ENCODE measurements at regions of chr12 and their contacts with region 1.

Region 1: GRCh38 chr12:24902511-24903328 is 46.2 kb downstream of the BCAT1 start:
- H3K4me3 Mint-ChIP-seq: peak overlapping the region; percentile 91
- H3K27ac Mint-ChIP-seq: no peak overlapping the region
- H3K4me1 Mint-ChIP-seq: peaks cover 46% of the 10 kb centered on the region
- H3K27me3 Mint-ChIP-seq: peaks cover 17% of the 10 kb centered on the region

Region 2: GRCh38 chr12:24814379-24815113 is 88.2 kb before region 1 on chr12:
- intact Hi-C with region 1: loop called (anchors 5 kb)
- H3K4me3 Mint-ChIP-seq: peak overlapping the region; percentile 55
- H3K27ac Mint-ChIP-seq: peak overlapping the region; percentile 81
- H3K4me1 Mint-ChIP-seq: peaks cover 30% of the 10 kb centered on the region
- H3K27me3 Mint-ChIP-seq: no peaks in the 10 kb centered on the region

Region 3: GRCh38 chr12:24948757-24949722 is 46.3 kb after region 1 on chr12 and contains the start of gene BCAT1:
- intact Hi-C with region 1: loop called (anchors 5 kb)
- H3K4me3 Mint-ChIP-seq: peak within 1 kb of the TSS; percentile 86
- H3K27ac Mint-ChIP-seq: peak within 1 kb of the TSS; percentile 79
- H3K4me1 Mint-ChIP-seq: peaks cover 56% of the 10 kb centered on the region
- H3K27me3 Mint-ChIP-seq: peaks cover 29% of the 10 kb centered on the region

Measured in dendritic cell treated with granulocyte-macrophage colony-stimulating factor and Interleukin-4, amounts not matched to agents 40 ng/mL and 50 ng/mL, for 4 days (primary cell).